ENCODE measurements at regions of chr17 and their contacts with region 1.

Region 1: DNA sequence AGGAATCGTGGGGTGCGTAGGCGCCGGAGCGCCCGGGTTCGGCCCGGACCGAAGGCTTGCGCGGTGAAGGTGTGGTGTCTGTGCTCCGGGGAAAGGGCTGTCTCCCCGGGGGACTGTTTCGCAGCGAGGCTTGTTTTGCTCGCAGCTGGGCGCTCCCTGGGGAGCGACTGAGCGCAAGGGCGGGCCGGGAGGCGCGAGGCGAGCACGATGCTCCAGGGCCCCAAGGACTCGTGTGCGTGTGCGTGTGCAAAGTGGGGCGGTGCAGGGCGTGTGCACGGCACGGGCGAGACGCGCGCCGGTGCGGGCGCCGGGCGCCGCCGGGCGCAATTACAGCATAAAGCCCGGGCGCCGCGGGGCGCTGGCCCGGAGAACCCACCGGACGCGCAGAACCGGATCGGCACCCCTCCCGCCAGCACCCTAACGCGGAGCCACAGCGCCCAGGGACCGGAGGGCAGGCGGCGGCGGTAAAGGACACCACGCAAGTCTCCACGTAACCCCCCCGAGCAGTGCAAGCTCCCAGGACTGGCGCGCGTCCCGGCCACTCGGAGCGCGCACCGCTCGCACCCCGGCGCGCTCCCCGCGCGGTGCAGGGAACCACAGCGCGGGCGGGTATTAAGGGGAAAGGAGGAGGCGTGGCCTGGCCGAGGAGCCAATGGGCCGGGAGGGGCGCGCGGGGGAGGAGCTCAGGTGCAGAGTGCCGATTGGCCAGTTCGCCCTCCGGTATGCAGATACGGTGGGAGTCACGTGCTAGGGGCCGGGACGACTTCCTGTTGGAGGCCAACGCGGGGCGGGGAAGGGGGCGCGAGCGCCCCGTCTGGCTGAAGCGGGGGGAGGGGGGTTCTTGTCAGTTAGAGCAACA is at the start of gene TNRC6C:
- DNase-seq: peak; percentile 98 to 100 (median 100)
- ATAC-seq: peak; percentile 96
- H3K4me3 ChIP-seq: peak within 1 kb of the TSS; percentile 79
- H3K4me3 Mint-ChIP-seq: peak within 1 kb of the TSS; percentile 93 to 100 (median 96)
- H3K27ac ChIP-seq: peak within 1 kb of the TSS; percentile 82
- H3K27ac Mint-ChIP-seq: peak within 1 kb of the TSS; percentile 82 to 98 (median 95)
- H3K4me1 ChIP-seq: peaks cover 26 to 35% of the 10 kb centered on the region in 2 donors
- H3K4me1 Mint-ChIP-seq: peaks cover 26 to 43% (median 36%) of the 10 kb centered on the region in 7 donors
- H3K27me3 ChIP-seq: no peaks in the 10 kb centered on the region
- H3K27me3 Mint-ChIP-seq: peaks cover 0 to 46% (median 0%) of the 10 kb centered on the region in 5 donors
- total RNA-seq, gene TNRC6C: 28.6 to 133 (median 104) TPM

Region 2: GRCh38 chr17:77542551-77543490 is 415.3 kb before region 1 on chr17:
- CTCF ChIA-PET with region 1: interaction called, 3 read pairs
- POLR2A ChIA-PET with region 1: interaction called, 13 read pairs
- intact Hi-C with region 1: loop called in 1 of 2 experiments (anchors 2 kb)
- DNase-seq: peak; percentile 32 to 72 (median 62)
- ATAC-seq: peak; percentile 87
- H3K4me3 ChIP-seq: no peak overlapping the region
- H3K4me3 Mint-ChIP-seq: no peak overlapping the region
- H3K27ac ChIP-seq: no peak overlapping the region
- H3K27ac Mint-ChIP-seq: no peak overlapping the region
- H3K4me1 ChIP-seq: peaks cover 0 to 5% of the 10 kb centered on the region in 2 donors
- H3K4me1 Mint-ChIP-seq: peaks cover 0 to 7% (median 0%) of the 10 kb centered on the region in 7 donors
- H3K27me3 ChIP-seq: no peaks in the 10 kb centered on the region
- H3K27me3 Mint-ChIP-seq: peaks cover 0 to 37% (median 5%) of the 10 kb centered on the region in 5 donors

Region 3: GRCh38 chr17:77779711-77780539 is 178.2 kb before region 1 on chr17:
- CTCF ChIA-PET with region 1: no interaction called
- POLR2A ChIA-PET with region 1: interaction called, 22 read pairs
- intact Hi-C with region 1: loop called in 1 of 2 experiments (anchors 1 kb)
- DNase-seq: no peak
- ATAC-seq: no peak
- H3K4me3 ChIP-seq: no peak overlapping the region
- H3K4me3 Mint-ChIP-seq: no peak overlapping the region
- H3K27ac ChIP-seq: no peak overlapping the region
- H3K27ac Mint-ChIP-seq: no peak overlapping the region
- H3K4me1 ChIP-seq: peaks cover 13 to 22% of the 10 kb centered on the region in 2 donors
- H3K4me1 Mint-ChIP-seq: peaks cover 7 to 14% (median 10%) of the 10 kb centered on the region in 7 donors
- H3K27me3 ChIP-seq: no peaks in the 10 kb centered on the region
- H3K27me3 Mint-ChIP-seq: peaks cover 0 to 4% (median 0%) of the 10 kb centered on the region in 5 donors

Region 4: DNA sequence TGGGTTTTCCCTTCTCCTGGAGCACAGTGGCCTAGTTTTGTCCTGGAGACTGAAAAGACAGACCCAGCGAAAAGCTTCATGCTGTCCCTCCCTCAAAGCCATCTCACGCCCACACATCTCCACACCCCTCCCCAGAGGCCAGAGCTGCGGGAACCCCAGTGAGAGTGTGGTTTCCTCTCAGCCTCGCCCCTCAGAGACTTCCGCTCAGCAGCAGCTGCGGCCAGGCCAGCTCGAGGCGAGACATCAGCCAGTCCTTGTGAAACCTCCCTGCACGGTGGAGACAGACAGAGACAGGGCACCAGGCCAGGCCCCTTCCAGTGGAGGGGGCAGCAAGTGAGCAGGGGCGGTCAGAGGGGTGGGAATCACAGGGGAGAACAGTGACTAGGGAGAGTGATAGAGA is 76.5 kb before region 1 on chr17:
- CTCF ChIA-PET with region 1: interaction called, 3 read pairs
- POLR2A ChIA-PET with region 1: interaction called, 141 read pairs
- intact Hi-C with region 1: loop called (anchors 1 kb)
- DNase-seq: peak; percentile 35 to 78 (median 45)
- ATAC-seq: peak; percentile 70
- H3K4me3 ChIP-seq: peak overlapping the region; percentile 61
- H3K4me3 Mint-ChIP-seq: peak overlapping the region; percentile 71 to 94 (median 81)
- H3K27ac ChIP-seq: peak overlapping the region; percentile 93
- H3K27ac Mint-ChIP-seq: peak overlapping the region; percentile 92 to 99 (median 98)
- H3K4me1 ChIP-seq: peaks cover 62 to 79% of the 10 kb centered on the region in 2 donors
- H3K4me1 Mint-ChIP-seq: peaks cover 58 to 98% (median 89%) of the 10 kb centered on the region in 7 donors
- H3K27me3 ChIP-seq: no peaks in the 10 kb centered on the region
- H3K27me3 Mint-ChIP-seq: peaks cover 0 to 17% (median 0%) of the 10 kb centered on the region in 5 donors

Region 5: GRCh38 chr17:77999413-78000173 is 41.5 kb after region 1 on chr17:
- CTCF ChIA-PET with region 1: no interaction called
- POLR2A ChIA-PET with region 1: interaction called, 13 read pairs
- intact Hi-C with region 1: loop called in 1 of 2 experiments (anchors 2 kb)
- DNase-seq: no peak
- ATAC-seq: no peak
- H3K4me3 ChIP-seq: no peak overlapping the region
- H3K4me3 Mint-ChIP-seq: peak overlapping the region in 7 of 10 donors; percentile 25 to 74 (median 37)
- H3K27ac ChIP-seq: no peak overlapping the region
- H3K27ac Mint-ChIP-seq: peak overlapping the region in 7 of 9 donors; percentile 37 to 71 (median 52)
- H3K4me1 ChIP-seq: peaks cover 0 to 43% of the 10 kb centered on the region in 2 donors
- H3K4me1 Mint-ChIP-seq: peaks cover 6 to 99% (median 90%) of the 10 kb centered on the region in 7 donors
- H3K27me3 ChIP-seq: no peaks in the 10 kb centered on the region
- H3K27me3 Mint-ChIP-seq: no peaks in the 10 kb centered on the region

Region 6: DNA sequence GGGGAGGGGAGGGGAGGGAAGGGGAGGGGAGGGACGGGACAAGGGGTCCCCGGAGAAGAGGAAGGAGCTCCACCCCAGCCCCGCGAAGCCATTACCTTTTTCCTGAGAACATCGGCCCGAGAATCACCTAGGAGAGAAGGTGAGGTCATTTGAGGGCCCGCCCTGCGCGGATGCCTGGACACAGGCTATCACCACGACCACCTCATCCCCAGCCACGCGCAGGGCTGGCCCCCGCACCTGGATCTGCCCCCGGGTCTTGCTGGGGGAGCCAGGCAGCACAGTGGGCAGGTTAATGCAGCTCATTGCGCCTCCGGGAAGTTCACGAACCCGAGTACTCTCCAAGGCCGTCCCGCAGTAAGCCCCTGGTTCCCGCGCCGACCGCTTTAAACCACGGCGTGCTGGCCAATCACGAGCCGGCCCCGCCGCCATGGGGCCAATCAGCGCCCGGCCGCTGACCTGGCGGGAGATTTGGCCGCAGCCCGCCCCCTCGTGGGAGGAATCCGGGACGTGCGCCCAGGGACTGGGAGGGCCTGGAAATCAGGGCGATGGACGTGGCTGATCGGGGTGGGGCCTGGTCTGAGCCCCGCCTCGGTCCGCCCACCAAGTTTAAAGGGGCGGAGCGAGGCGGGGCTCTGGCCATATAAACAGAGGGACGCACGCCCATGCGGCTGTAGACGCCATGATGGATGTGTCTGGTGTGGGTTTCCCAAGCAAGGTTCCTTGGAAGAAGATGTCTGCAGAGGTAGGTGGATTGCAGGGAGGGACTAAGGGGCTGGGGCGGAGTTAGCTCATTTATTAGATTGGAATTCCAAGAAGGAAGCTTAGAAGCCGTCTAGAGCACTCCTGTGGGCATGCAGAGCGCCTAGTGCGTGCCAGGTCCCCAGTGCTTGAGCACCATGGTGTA is 228.9 kb after region 1 on chr17 and contains the starts of genes AFMID and TK1:
- CTCF ChIA-PET with region 1: no interaction called
- POLR2A ChIA-PET with region 1: no interaction called
- intact Hi-C with region 1: no loop called
- DNase-seq: peak; percentile 33 to 96 (median 56)
- ATAC-seq: peak; percentile 95
- H3K4me3 ChIP-seq: peak within 1 kb of the TSS; percentile 62
- H3K4me3 Mint-ChIP-seq: peak within 1 kb of the TSS; percentile 75 to 91 (median 85)
- H3K27ac ChIP-seq: no peak within 1 kb of the TSS
- H3K27ac Mint-ChIP-seq: peak within 1 kb of the TSS in 8 of 9 donors; percentile 14 to 81 (median 63)
- H3K4me1 ChIP-seq: peaks cover 0 to 5% of the 10 kb centered on the region in 2 donors
- H3K4me1 Mint-ChIP-seq: peaks cover 0 to 39% (median 13%) of the 10 kb centered on the region in 7 donors
- H3K27me3 ChIP-seq: no peaks in the 10 kb centered on the region
- H3K27me3 Mint-ChIP-seq: no peaks in the 10 kb centered on the region
- total RNA-seq, gene AFMID: 1.2 to 19.2 (median 3.0) TPM
- total RNA-seq, gene TK1: 0.29 to 57.7 (median 1.0) TPM in 3 of 5 experiments, not detected in the others

Region 7: DNA sequence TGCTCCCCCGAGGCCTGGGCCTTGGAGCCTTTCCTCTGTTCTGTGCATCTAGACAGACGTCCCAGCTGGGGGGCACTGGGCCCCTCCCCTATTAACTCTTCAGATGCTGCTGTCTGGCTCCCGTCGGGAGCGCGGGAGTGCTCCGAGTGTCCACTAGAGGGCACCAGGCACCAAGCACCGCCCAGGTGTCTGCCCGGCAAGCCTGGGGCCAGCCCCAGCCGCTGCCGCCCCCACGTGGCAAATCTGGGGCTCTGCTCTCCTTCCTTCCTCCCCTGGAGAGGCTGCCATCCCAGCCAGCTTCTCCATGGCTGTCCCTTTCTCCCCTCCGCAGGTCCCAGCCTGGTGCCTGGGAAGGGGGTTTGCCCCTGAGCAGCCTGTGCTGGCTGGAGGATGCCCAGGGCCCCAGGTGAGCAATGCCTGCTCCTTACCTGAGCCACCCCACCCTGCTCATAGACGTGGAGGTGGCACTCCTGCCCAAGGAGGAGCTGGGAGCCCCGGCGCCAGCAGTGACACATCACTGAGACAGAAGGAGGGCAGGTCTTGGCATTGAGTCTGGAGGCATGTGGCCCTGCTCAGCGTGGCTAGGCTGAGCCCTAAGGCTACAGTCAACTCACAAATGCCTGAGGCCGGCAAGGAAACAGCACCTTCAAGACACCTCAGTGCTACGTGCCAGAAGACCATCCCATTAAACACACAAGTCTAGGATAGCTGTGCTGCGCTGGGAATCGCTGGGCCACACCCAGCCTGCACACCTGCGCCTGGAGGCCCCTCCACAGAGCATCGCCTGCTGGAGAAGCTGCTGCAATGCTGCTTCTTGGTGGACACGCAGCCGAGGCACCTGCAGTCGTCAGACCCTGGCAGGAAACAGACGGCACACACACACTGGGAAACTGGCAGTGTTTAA is 293.1 kb after region 1 on chr17:
- CTCF ChIA-PET with region 1: no interaction called
- POLR2A ChIA-PET with region 1: interaction called, 8 read pairs
- intact Hi-C with region 1: loop called (anchors 1 to 5 kb)
- DNase-seq: peak; percentile 70 to 88 (median 82)
- ATAC-seq: peak; percentile 73
- H3K4me3 ChIP-seq: peak overlapping the region; percentile 73
- H3K4me3 Mint-ChIP-seq: peak overlapping the region; percentile 82 to 96 (median 92)
- H3K27ac ChIP-seq: peak overlapping the region; percentile 87
- H3K27ac Mint-ChIP-seq: peak overlapping the region; percentile 91 to 100 (median 98)
- H3K4me1 ChIP-seq: peaks cover 37 to 48% of the 10 kb centered on the region in 2 donors
- H3K4me1 Mint-ChIP-seq: peaks cover 24 to 57% (median 47%) of the 10 kb centered on the region in 7 donors
- H3K27me3 ChIP-seq: no peaks in the 10 kb centered on the region
- H3K27me3 Mint-ChIP-seq: peaks cover 0 to 4% (median 0%) of the 10 kb centered on the region in 5 donors

Measured in naive thymus-derived CD4-positive, alpha-beta T cell (primary cell).